IMR-90 (cell line): ENCODE measurements at regions of chr4 and their contacts with region 1.

Region 1: DNA sequence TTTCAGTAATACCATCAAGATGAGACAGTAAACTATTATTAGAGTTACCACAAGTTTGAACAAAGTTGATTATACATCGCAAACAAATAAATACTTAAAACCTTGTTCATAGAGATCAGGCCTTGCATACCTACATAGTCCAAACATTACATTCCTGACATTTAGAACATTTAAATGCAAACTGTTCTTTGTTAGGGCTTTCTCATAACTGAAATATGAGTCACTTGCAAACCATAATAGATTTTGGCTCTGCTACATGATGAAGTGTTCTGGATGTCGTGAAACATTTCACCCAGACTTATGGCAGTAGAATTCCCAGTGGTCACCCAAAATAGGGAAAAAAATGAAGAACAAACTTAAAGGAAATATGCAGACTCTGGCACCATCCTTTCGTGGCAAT is 75.0 kb downstream of the FAT4 start:
- DNase-seq: peak; percentile 96
- ATAC-seq: peak; percentile 89
- H3K4me3 ChIP-seq: no peak overlapping the region
- H3K27ac ChIP-seq: peak overlapping the region; percentile 96; the same call in 1 of the 2 replicates
- H3K4me1 ChIP-seq: peaks cover 4% of the 10 kb centered on the region
- H3K27me3 ChIP-seq: no peaks in the 10 kb centered on the region
- CTCF ChIP-seq: no peak
- POLR2A ChIP-seq: no peak
- RAD21 ChIP-seq: no peak

Region 2: DNA sequence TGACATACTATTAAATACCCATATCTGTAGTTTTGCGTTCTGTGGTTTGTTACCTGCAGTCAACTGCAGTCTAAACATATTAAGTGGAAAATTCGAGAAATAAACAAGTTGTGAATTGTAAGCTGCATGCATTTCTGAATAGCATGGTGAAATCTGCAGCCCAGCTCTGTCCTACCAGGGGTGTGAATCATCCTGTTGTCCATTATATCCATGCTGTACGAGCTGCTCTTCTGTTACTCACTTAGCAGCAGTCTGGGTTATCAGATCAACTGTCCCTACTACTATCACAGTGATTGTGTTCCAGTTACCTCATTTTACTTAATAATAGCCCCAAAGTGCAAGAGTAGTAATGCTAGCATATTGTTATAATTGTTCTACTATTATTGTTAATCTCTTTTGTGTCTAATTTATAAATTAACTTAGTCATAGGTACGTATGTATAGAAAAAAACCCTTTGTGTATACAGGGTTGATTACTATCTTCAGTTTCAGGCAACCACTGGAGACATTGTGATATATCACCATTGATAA is 248.7 kb before region 1 on chr4:
- CTCF ChIA-PET with region 1: no interaction called
- POLR2A ChIA-PET with region 1: no interaction called
- dilution Hi-C with region 1: no loop called
- in situ Hi-C with region 1: no loop called
- intact Hi-C with region 1: no loop called
- DNase-seq: peak; percentile 74
- ATAC-seq: peak; percentile 98
- H3K4me3 ChIP-seq: no peak overlapping the region
- H3K27ac ChIP-seq: no peak overlapping the region
- H3K4me1 ChIP-seq: no peaks in the 10 kb centered on the region
- H3K27me3 ChIP-seq: no peaks in the 10 kb centered on the region
- CTCF ChIP-seq: no peak
- POLR2A ChIP-seq: no peak
- RAD21 ChIP-seq: no peak

Region 3: DNA sequence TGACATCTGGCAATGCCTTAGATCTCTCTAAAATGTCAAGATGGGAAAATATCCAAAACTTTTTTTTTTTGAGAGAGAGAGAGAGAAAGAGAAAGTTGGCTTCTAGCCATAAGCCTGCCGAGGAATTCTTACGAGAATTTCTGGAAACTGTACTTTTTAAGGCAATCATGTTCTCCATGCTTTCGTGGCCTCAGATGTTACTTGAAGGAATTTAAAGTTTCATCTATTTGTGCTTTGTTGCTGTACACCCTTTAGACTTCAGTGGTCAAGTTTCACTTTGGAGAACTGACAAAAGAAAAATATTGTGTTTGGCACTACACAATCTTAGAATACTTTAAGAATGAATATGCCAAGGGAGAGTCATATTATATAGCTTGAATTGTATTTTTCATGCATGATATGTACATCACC is 21.0 kb before region 1 on chr4:
- CTCF ChIA-PET with region 1: no interaction called
- POLR2A ChIA-PET with region 1: no interaction called
- dilution Hi-C with region 1: no loop called
- in situ Hi-C with region 1: no loop called
- intact Hi-C with region 1: loop called (anchors 2 kb)
- DNase-seq: peak; percentile 84
- ATAC-seq: peak; percentile 76
- H3K4me3 ChIP-seq: peak overlapping the region; percentile 60
- H3K27ac ChIP-seq: peak overlapping the region; percentile 88; the same call in 1 of the 2 replicates
- H3K4me1 ChIP-seq: peaks cover 5% of the 10 kb centered on the region
- H3K27me3 ChIP-seq: no peaks in the 10 kb centered on the region
- CTCF ChIP-seq: no peak
- POLR2A ChIP-seq: no peak
- RAD21 ChIP-seq: no peak

Region 4: GRCh38 chr4:125505621-125506020 is 115.9 kb after region 1 on chr4:
- CTCF ChIA-PET with region 1: no interaction called
- POLR2A ChIA-PET with region 1: no interaction called
- dilution Hi-C with region 1: no loop called
- in situ Hi-C with region 1: no loop called
- intact Hi-C with region 1: no loop called
- DNase-seq: no peak
- ATAC-seq: no peak
- H3K4me3 ChIP-seq: no peak overlapping the region
- H3K27ac ChIP-seq: no peak overlapping the region
- H3K4me1 ChIP-seq: no peaks in the 10 kb centered on the region
- H3K27me3 ChIP-seq: no peaks in the 10 kb centered on the region
- CTCF ChIP-seq: no peak
- POLR2A ChIP-seq: no peak
- RAD21 ChIP-seq: no peak

Region 5: GRCh38 chr4:125741825-125742452 is 352.2 kb after region 1 on chr4:
- CTCF ChIA-PET with region 1: no interaction called
- POLR2A ChIA-PET with region 1: no interaction called
- dilution Hi-C with region 1: no loop called
- in situ Hi-C with region 1: no loop called
- intact Hi-C with region 1: loop called (anchors 5 kb)
- DNase-seq: peak; percentile 43
- ATAC-seq: peak; percentile 75
- H3K4me3 ChIP-seq: no peak overlapping the region
- H3K27ac ChIP-seq: no peak overlapping the region
- H3K4me1 ChIP-seq: peaks cover 1% of the 10 kb centered on the region; the same call in 1 of the 2 replicates
- H3K27me3 ChIP-seq: no peaks in the 10 kb centered on the region
- CTCF ChIP-seq: peak; percentile 61
- POLR2A ChIP-seq: no peak
- RAD21 ChIP-seq: peak; percentile 59